ENCODE measurements at regions of chr6 and their contacts with region 1.

Region 1: GRCh38 chr6:126339796-126340609 is at the start of gene CENPW:
- DNase-seq: peak; percentile 97
- ATAC-seq: peak; percentile 92
- H3K4me3 Mint-ChIP-seq: no peak within 1 kb of the TSS
- H3K27ac Mint-ChIP-seq: no peak within 1 kb of the TSS
- H3K4me1 Mint-ChIP-seq: peaks cover 13% of the 10 kb centered on the region
- H3K27me3 Mint-ChIP-seq: no peaks in the 10 kb centered on the region
- total RNA-seq, gene CENPW: 44.1 to 63.6 TPM

Region 2: GRCh38 chr6:125986300-125987025 is 353.5 kb before region 1 on chr6 and contains the start of gene TRMT11:
- CTCF ChIA-PET with region 1: interaction called, 4 read pairs
- POLR2A ChIA-PET with region 1: interaction called, 4 read pairs
- intact Hi-C with region 1: loop called (anchors 1 to 10 kb)
- DNase-seq: peak; percentile 89
- ATAC-seq: peak; percentile 96
- H3K4me3 Mint-ChIP-seq: no peak within 1 kb of the TSS
- H3K27ac Mint-ChIP-seq: peak within 1 kb of the TSS; percentile 20
- H3K4me1 Mint-ChIP-seq: peaks cover 7% of the 10 kb centered on the region
- H3K27me3 Mint-ChIP-seq: no peaks in the 10 kb centered on the region
- total RNA-seq, gene TRMT11: 33.4 to 40.5 TPM

Region 3: GRCh38 chr6:126176282-126176681 is 163.7 kb before region 1 on chr6:
- CTCF ChIA-PET with region 1: no interaction called
- POLR2A ChIA-PET with region 1: no interaction called
- intact Hi-C with region 1: loop called in 1 of 2 experiments (anchors 5 kb)
- DNase-seq: no peak
- ATAC-seq: no peak
- H3K4me3 Mint-ChIP-seq: no peak overlapping the region
- H3K27ac Mint-ChIP-seq: no peak overlapping the region
- H3K4me1 Mint-ChIP-seq: peaks cover 6% of the 10 kb centered on the region
- H3K27me3 Mint-ChIP-seq: no peaks in the 10 kb centered on the region